ENCODE measurements at regions of chr3 and their contacts with region 1.

Region 1: GRCh38 chr3:113211330-113212149 is at the start of gene BOC:
- DNase-seq: peak; percentile 68
- ATAC-seq: peak; percentile 75
- H3K4me3 ChIP-seq: peak within 1 kb of the TSS; percentile 76
- H3K27ac ChIP-seq: peak within 1 kb of the TSS; percentile 92
- H3K4me1 ChIP-seq: peaks cover 16% of the 10 kb centered on the region
- H3K27me3 ChIP-seq: no peaks in the 10 kb centered on the region; the same call in 1 of the 2 replicates
- CTCF ChIP-seq: 0 out of 2 replicates have a peak, but pooled peaks have one; percentile 16
- POLR2A ChIP-seq: peak; percentile 53; the same call in 1 of the 2 replicates
- RAD21 ChIP-seq: no peak
- total RNA-seq, gene BOC: 5.3 and 6.8 TPM in 2 replicates

Region 2: GRCh38 chr3:113070681-113071143 is 140.8 kb before region 1 on chr3:
- CTCF ChIA-PET with region 1: no interaction called
- POLR2A ChIA-PET with region 1: no interaction called
- dilution Hi-C with region 1: no loop called
- in situ Hi-C with region 1: no loop called
- intact Hi-C with region 1: loop called (anchors 5 kb)
- DNase-seq: peak; percentile 55
- ATAC-seq: peak; percentile 79
- H3K4me3 ChIP-seq: no peak overlapping the region
- H3K27ac ChIP-seq: no peak overlapping the region
- H3K4me1 ChIP-seq: no peaks in the 10 kb centered on the region; the same call in 1 of the 2 replicates
- H3K27me3 ChIP-seq: no peaks in the 10 kb centered on the region; the same call in 1 of the 2 replicates
- CTCF ChIP-seq: no peak
- POLR2A ChIP-seq: no peak
- RAD21 ChIP-seq: no peak

Region 3: GRCh38 chr3:113136071-113136470 is 75.5 kb before region 1 on chr3:
- CTCF ChIA-PET with region 1: no interaction called
- POLR2A ChIA-PET with region 1: no interaction called
- dilution Hi-C with region 1: no loop called
- in situ Hi-C with region 1: no loop called
- intact Hi-C with region 1: loop called (anchors 5 kb)
- DNase-seq: peak; percentile 27
- ATAC-seq: peak; percentile 21; the same call in 1 of the 2 replicates
- H3K4me3 ChIP-seq: no peak overlapping the region
- H3K27ac ChIP-seq: peak overlapping the region; percentile 8; the same call in 1 of the 2 replicates
- H3K4me1 ChIP-seq: peaks cover 4% of the 10 kb centered on the region; the same call in 1 of the 2 replicates
- H3K27me3 ChIP-seq: peaks cover 3% of the 10 kb centered on the region
- CTCF ChIP-seq: peak; percentile 47
- POLR2A ChIP-seq: no peak
- RAD21 ChIP-seq: peak; percentile 58

Region 4: DNA sequence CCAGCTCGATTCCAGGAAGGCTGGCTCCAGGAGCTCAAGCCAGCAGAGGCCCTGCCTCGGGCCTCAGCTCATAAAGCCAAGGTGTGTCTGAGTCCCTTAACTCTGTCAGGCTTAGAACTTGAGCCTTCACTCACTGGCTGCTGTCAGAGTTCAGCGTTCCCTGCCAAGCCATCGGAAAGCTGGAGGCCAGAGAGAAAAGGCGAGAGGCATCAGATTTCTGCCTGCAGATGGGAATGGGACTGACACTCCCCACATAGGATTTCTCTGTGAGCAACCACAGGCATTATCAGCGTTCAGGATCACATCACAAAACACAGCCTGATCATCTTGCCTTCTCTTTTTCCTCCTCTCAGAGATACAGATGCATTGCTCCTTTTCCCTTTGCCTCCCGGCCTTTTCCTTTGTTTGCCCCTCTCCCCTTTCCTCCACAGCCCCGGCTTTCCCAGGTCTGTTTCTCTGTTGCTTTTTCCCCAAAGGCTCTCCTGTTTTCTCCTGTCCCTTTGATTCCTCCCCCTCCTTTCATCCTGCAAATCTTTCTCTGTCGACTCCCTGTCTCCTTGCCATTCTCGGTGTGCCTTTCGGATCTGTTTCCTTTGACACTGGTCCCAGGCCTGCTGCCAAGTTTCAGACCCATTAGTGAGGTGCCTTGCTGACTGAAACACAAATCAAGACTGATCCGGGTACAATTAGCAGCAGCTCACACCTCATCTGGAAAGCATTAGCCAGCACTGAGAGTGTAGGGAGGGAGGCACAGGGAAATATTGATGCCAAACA is 44.6 kb before region 1 on chr3:
- CTCF ChIA-PET with region 1: no interaction called
- POLR2A ChIA-PET with region 1: no interaction called
- dilution Hi-C with region 1: no loop called
- in situ Hi-C with region 1: no loop called
- intact Hi-C with region 1: loop called (anchors 5 kb)
- DNase-seq: peak; percentile 65
- ATAC-seq: peak; percentile 95
- H3K4me3 ChIP-seq: no peak overlapping the region
- H3K27ac ChIP-seq: peak overlapping the region; percentile 76; the same call in 1 of the 2 replicates
- H3K4me1 ChIP-seq: peaks cover 10% of the 10 kb centered on the region; the same call in 1 of the 2 replicates
- H3K27me3 ChIP-seq: no peaks in the 10 kb centered on the region; the same call in 1 of the 2 replicates
- CTCF ChIP-seq: 0 out of 2 replicates have a peak, but pooled peaks have one; percentile 1
- POLR2A ChIP-seq: no peak
- RAD21 ChIP-seq: no peak

Region 5: GRCh38 chr3:113287803-113288648 is 76.5 kb after region 1 on chr3:
- CTCF ChIA-PET with region 1: interaction called, 4 read pairs
- POLR2A ChIA-PET with region 1: interaction called, 3 read pairs
- dilution Hi-C with region 1: no loop called
- in situ Hi-C with region 1: no loop called
- intact Hi-C with region 1: loop called (anchors 1 kb)
- DNase-seq: peak; percentile 72
- ATAC-seq: peak; percentile 64
- H3K4me3 ChIP-seq: no peak overlapping the region
- H3K27ac ChIP-seq: peak overlapping the region; percentile 59
- H3K4me1 ChIP-seq: peaks cover 14% of the 10 kb centered on the region
- H3K27me3 ChIP-seq: peaks cover 14% of the 10 kb centered on the region
- CTCF ChIP-seq: peak; percentile 99
- POLR2A ChIP-seq: peak; percentile 59; the same call in 1 of the 2 replicates
- RAD21 ChIP-seq: peak; percentile 97

Measured in IMR-90 (cell line).